CD8-positive, alpha-beta T cell (primary cell): ENCODE measurements at regions of chr3 and their contacts with region 1.

Region 1: DNA sequence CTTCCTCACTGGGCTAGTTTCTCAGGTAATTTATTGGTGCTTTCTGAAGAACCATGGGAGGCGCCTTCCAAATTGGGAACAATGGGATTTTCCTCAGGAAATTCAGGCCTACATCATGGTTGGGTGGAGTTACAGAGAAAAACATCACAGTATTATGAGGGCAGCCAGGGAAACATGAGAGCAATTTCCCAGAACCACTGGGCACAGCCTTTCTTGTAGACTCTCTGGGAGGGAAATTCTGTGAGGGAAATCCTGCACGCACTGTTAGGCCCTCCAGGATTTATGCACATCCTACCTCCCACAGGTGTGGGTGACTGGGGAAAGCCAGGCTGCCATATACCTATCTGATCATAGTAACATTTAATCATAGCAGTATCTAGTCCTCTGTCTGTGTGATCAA is 13.2 kb downstream of the POPDC2 start:
- DNase-seq: no peak
- ATAC-seq: no peak
- H3K4me3 ChIP-seq: no peak overlapping the region
- H3K4me3 Mint-ChIP-seq: no peak overlapping the region
- H3K27ac ChIP-seq: no peak overlapping the region
- H3K27ac Mint-ChIP-seq: no peak overlapping the region
- H3K4me1 ChIP-seq: no peaks in the 10 kb centered on the region
- H3K4me1 Mint-ChIP-seq: no peaks in the 10 kb centered on the region
- H3K27me3 ChIP-seq: no peaks in the 10 kb centered on the region
- H3K27me3 Mint-ChIP-seq: no peaks in the 10 kb centered on the region
- CTCF ChIP-seq: no peak

Region 2: DNA sequence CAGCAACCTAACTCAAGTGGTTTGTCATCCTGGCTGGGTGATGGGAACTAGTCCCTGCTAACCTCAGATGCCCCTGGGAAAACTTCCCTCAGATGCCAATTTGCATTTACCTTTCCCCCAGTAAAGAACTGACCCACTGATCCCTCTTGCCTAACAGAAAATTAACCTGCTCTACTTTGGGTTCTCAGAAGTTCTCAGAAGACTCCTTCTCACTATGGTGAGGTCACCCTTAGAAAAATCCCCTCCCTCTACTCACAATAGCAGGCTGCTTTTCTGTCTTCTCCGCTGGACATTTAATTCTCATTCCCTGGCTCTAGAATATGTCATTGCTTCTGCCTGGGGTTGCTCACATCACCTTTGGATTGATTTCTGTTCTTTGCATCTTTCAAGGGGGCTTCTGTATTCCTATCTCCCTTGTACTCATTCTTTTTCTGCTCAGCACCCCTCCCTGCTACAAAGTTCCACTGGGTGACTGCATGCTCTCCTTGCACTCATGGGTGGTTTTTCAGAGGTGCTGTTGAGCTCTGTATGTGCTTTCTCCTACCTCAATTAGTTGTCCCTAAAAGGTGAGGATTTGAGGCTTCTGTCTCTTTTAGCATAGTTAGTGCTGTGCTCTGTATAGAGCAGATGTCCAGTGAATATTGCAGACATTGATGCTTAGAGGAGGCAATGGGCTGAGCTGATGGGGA is 48.6 kb before region 1 on chr3:
- CTCF ChIA-PET with region 1: no interaction called
- POLR2A ChIA-PET with region 1: no interaction called
- intact Hi-C with region 1: loop called in 1 of 2 experiments (anchors 1 kb)
- DNase-seq: no peak
- ATAC-seq: no peak
- H3K4me3 ChIP-seq: no peak overlapping the region
- H3K4me3 Mint-ChIP-seq: no peak overlapping the region
- H3K27ac ChIP-seq: no peak overlapping the region
- H3K27ac Mint-ChIP-seq: no peak overlapping the region
- H3K4me1 ChIP-seq: no peaks in the 10 kb centered on the region
- H3K4me1 Mint-ChIP-seq: no peaks in the 10 kb centered on the region
- H3K27me3 ChIP-seq: no peaks in the 10 kb centered on the region
- H3K27me3 Mint-ChIP-seq: no peaks in the 10 kb centered on the region
- CTCF ChIP-seq: no peak

Region 3: GRCh38 chr3:119630128-119630879 is 16.9 kb before region 1 on chr3:
- CTCF ChIA-PET with region 1: no interaction called
- POLR2A ChIA-PET with region 1: no interaction called
- intact Hi-C with region 1: no loop called
- DNase-seq: peak in 1 of 9 experiments; percentile 10
- ATAC-seq: no peak
- H3K4me3 ChIP-seq: no peak overlapping the region
- H3K4me3 Mint-ChIP-seq: no peak overlapping the region
- H3K27ac ChIP-seq: no peak overlapping the region
- H3K27ac Mint-ChIP-seq: no peak overlapping the region
- H3K4me1 ChIP-seq: peaks cover 6% of the 10 kb centered on the region
- H3K4me1 Mint-ChIP-seq: peaks cover 6% of the 10 kb centered on the region
- H3K27me3 ChIP-seq: no peaks in the 10 kb centered on the region
- H3K27me3 Mint-ChIP-seq: peaks cover 15% of the 10 kb centered on the region
- CTCF ChIP-seq: no peak